WTC11 (cell line): ENCODE measurements at regions of chr9 and their contacts with region 1.

Region 1: GRCh38 chr9:91949946-91950664 is at the start of gene ROR2:
- DNase-seq: peak; percentile 86
- ATAC-seq: peak; percentile 74
- H3K4me3 Mint-ChIP-seq: peak within 1 kb of the TSS; percentile 89
- H3K27ac Mint-ChIP-seq: no peak within 1 kb of the TSS
- H3K4me1 Mint-ChIP-seq: peaks cover 38% of the 10 kb centered on the region
- H3K27me3 Mint-ChIP-seq: peaks cover 45% of the 10 kb centered on the region
- CTCF ChIP-seq: peak; percentile 45
- total RNA-seq, gene ROR2: 15.2 to 19.8 TPM (median 15.9 TPM) in 3 replicates

Region 2: GRCh38 chr9:91664667-91665066 is 285.4 kb before region 1 on chr9:
- CTCF ChIA-PET with region 1: no interaction called
- POLR2A ChIA-PET with region 1: no interaction called
- DNase-seq: no peak
- ATAC-seq: no peak
- H3K4me3 Mint-ChIP-seq: no peak overlapping the region
- H3K27ac Mint-ChIP-seq: no peak overlapping the region
- H3K4me1 Mint-ChIP-seq: peaks cover 10% of the 10 kb centered on the region
- H3K27me3 Mint-ChIP-seq: no peaks in the 10 kb centered on the region; the same call in 1 of the 2 replicates
- CTCF ChIP-seq: no peak

Region 3: DNA sequence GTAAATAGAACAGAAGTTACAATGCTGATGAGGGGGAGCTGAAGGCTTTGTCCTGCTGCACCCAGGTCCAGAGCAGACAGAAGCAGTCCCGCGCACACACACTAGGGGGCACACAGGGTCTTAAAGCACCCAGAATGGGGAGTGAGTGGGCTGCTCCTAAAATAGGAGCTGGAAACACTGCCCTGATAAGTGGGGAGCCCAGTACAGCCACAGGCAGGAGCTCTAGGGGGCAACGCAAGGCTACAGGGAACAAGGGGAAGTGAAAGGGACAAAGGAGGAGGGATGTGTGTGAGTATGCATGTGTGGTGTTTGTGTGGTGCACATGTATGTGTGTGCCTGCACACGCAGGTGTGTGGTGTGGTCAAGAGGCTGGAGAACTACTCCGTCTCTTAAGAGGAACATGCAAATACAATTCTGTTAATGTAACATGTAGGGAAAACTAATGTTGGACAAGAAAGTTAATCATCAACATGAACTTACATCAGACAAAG is 191.6 kb before region 1 on chr9:
- CTCF ChIA-PET with region 1: interaction called, 51 read pairs
- POLR2A ChIA-PET with region 1: no interaction called
- DNase-seq: peak; percentile 84
- ATAC-seq: peak; percentile 96
- H3K4me3 Mint-ChIP-seq: no peak overlapping the region
- H3K27ac Mint-ChIP-seq: no peak overlapping the region
- H3K4me1 Mint-ChIP-seq: peaks cover 6% of the 10 kb centered on the region
- H3K27me3 Mint-ChIP-seq: no peaks in the 10 kb centered on the region
- CTCF ChIP-seq: peak; percentile 76

Region 4: DNA sequence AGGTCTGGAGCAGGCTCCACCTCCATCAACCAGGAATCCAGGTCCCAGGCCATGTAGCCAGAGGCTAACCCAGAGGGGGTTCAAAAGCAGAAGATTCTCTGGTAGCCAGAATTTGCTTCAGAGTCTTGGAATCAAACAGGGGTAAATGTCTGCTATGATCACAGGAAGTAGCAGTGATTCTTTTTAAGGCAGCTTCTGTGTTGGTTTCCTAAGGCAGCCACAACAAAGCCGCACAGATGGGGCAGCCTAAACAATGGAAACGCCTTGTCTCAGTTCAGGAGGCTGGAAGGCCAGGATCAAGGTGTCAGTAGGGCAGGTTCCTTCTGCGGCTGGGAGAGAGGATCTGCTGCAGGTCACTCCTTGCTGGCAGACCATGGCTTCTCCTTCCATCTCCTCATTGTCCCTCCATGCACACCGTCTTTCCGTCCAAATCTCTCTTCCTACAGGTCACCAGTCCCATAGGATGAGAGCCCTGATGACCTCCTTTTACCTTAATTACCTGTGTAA is 167.3 kb before region 1 on chr9:
- CTCF ChIA-PET with region 1: interaction called, 26 read pairs
- POLR2A ChIA-PET with region 1: no interaction called
- DNase-seq: no peak
- ATAC-seq: no peak
- H3K4me3 Mint-ChIP-seq: no peak overlapping the region
- H3K27ac Mint-ChIP-seq: no peak overlapping the region
- H3K4me1 Mint-ChIP-seq: peaks cover 19% of the 10 kb centered on the region
- H3K27me3 Mint-ChIP-seq: no peaks in the 10 kb centered on the region
- CTCF ChIP-seq: no peak

Region 5: DNA sequence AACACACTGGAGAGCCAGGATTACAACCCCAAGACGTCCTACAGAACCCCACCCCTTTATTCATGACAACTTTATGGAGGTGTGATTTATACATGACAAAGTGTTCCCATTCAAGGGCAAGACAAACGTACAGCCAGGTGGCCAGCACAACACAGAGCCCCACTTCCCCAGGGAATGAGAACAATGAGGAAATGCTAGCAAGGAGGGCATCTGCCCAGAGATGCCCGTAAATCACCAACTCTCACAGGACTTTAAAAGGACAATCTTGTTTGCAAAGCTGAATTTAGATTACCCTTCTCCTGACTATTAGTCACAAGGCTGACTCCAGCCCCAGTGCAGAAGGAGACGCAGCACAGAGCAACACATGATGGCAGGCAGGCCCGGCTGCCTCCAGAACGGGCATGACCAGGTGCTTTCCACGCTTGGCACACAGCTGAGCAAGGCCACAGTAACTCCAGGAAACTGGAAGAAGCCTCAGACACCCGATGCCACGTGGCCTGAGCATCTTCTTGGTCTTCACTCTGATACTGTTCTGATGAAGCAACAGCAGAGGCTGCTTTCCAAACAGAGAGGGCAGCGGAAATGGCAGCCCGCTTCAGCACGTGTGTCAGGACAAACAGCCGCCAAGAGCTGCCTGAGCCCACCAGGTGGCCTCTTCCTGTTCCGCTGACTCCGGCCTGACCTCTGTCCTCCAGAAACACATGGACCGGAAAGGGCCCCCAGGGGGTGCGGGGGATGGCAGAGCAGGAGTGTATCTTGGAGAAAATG is 51.5 kb before region 1 on chr9:
- CTCF ChIA-PET with region 1: interaction called, 12 read pairs
- POLR2A ChIA-PET with region 1: interaction called, 4 read pairs
- DNase-seq: peak; percentile 40
- ATAC-seq: peak; percentile 35
- H3K4me3 Mint-ChIP-seq: no peak overlapping the region
- H3K27ac Mint-ChIP-seq: no peak overlapping the region
- H3K4me1 Mint-ChIP-seq: peaks cover 78% of the 10 kb centered on the region
- H3K27me3 Mint-ChIP-seq: no peaks in the 10 kb centered on the region
- CTCF ChIP-seq: no peak

Region 6: DNA sequence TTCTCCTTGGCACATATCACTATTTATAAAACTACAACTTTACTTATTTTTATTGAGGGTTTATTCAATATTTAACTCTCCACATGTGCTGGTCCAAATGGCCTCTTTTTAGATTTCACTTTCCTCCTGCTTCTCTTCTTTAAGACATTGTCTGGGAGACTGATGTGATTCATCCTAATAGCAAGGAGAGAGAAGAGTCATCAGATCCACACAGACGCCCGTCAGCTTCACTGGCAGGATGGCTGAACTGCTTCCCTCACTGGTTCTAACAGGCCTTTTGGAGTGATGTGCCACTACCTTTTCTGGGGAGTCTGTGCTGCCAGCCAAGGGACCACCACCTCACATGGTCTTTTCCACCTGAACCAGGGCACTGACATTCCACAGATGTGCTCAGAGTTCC is 16.4 kb after region 1 on chr9:
- CTCF ChIA-PET with region 1: interaction called, 20 read pairs
- POLR2A ChIA-PET with region 1: no interaction called
- DNase-seq: no peak
- ATAC-seq: no peak
- H3K4me3 Mint-ChIP-seq: no peak overlapping the region
- H3K27ac Mint-ChIP-seq: no peak overlapping the region
- H3K4me1 Mint-ChIP-seq: no peaks in the 10 kb centered on the region
- H3K27me3 Mint-ChIP-seq: no peaks in the 10 kb centered on the region; the same call in none of the 2 replicates
- CTCF ChIP-seq: no peak